ENCODE measurements at regions of chr2 and their contacts with region 1.

Region 1: GRCh38 chr2:200525882-200526651 is at the start of gene SGO2:
- DNase-seq: peak; percentile 84 to 95 (median 94)
- ATAC-seq: peak; percentile 100
- H3K4me3 ChIP-seq: peak within 1 kb of the TSS; percentile 74
- H3K4me3 Mint-ChIP-seq: peak within 1 kb of the TSS; percentile 88 to 95 (median 92)
- H3K27ac ChIP-seq: peak within 1 kb of the TSS; percentile 64
- H3K27ac Mint-ChIP-seq: peak within 1 kb of the TSS; percentile 66 to 89 (median 85)
- H3K4me1 ChIP-seq: peaks cover 6 to 8% of the 10 kb centered on the region in 2 donors
- H3K4me1 Mint-ChIP-seq: peaks cover 7 to 34% (median 9%) of the 10 kb centered on the region in 7 donors
- H3K27me3 ChIP-seq: no peaks in the 10 kb centered on the region
- H3K27me3 Mint-ChIP-seq: peaks cover 0 to 1% (median 0%) of the 10 kb centered on the region in 5 donors
- total RNA-seq, gene SGO2: 1.4 to 32.3 (median 2.9) TPM

Region 2: GRCh38 chr2:199850718-199851500 is 675.2 kb before region 1 on chr2 and contains the start of gene FTCDNL1:
- CTCF ChIA-PET with region 1: no interaction called
- POLR2A ChIA-PET with region 1: no interaction called
- intact Hi-C with region 1: loop called in 1 of 2 experiments (anchors 10 kb)
- DNase-seq: peak; percentile 46 to 77 (median 65)
- ATAC-seq: peak; percentile 96
- H3K4me3 ChIP-seq: peak within 1 kb of the TSS; percentile 75
- H3K4me3 Mint-ChIP-seq: peak within 1 kb of the TSS; percentile 90 to 100 (median 94)
- H3K27ac ChIP-seq: peak within 1 kb of the TSS; percentile 44
- H3K27ac Mint-ChIP-seq: peak within 1 kb of the TSS; percentile 80 to 96 (median 89)
- H3K4me1 ChIP-seq: no peaks in the 10 kb centered on the region
- H3K4me1 Mint-ChIP-seq: peaks cover 0 to 10% (median 6%) of the 10 kb centered on the region in 7 donors
- H3K27me3 ChIP-seq: no peaks in the 10 kb centered on the region
- H3K27me3 Mint-ChIP-seq: peaks cover 0 to 20% (median 0%) of the 10 kb centered on the region in 5 donors
- total RNA-seq, gene FTCDNL1: 1.2 to 3.7 (median 2.6) TPM

Region 3: GRCh38 chr2:200252265-200253067 is 273.6 kb before region 1 on chr2:
- CTCF ChIA-PET with region 1: no interaction called
- POLR2A ChIA-PET with region 1: no interaction called
- intact Hi-C with region 1: no loop called
- DNase-seq: no peak
- ATAC-seq: no peak
- H3K4me3 ChIP-seq: no peak overlapping the region
- H3K4me3 Mint-ChIP-seq: no peak overlapping the region
- H3K27ac ChIP-seq: no peak overlapping the region
- H3K27ac Mint-ChIP-seq: no peak overlapping the region
- H3K4me1 ChIP-seq: no peaks in the 10 kb centered on the region
- H3K4me1 Mint-ChIP-seq: peaks cover 0 to 5% (median 0%) of the 10 kb centered on the region in 7 donors
- H3K27me3 ChIP-seq: no peaks in the 10 kb centered on the region
- H3K27me3 Mint-ChIP-seq: peaks cover 8 to 28% (median 10%) of the 10 kb centered on the region in 5 donors

Region 4: DNA sequence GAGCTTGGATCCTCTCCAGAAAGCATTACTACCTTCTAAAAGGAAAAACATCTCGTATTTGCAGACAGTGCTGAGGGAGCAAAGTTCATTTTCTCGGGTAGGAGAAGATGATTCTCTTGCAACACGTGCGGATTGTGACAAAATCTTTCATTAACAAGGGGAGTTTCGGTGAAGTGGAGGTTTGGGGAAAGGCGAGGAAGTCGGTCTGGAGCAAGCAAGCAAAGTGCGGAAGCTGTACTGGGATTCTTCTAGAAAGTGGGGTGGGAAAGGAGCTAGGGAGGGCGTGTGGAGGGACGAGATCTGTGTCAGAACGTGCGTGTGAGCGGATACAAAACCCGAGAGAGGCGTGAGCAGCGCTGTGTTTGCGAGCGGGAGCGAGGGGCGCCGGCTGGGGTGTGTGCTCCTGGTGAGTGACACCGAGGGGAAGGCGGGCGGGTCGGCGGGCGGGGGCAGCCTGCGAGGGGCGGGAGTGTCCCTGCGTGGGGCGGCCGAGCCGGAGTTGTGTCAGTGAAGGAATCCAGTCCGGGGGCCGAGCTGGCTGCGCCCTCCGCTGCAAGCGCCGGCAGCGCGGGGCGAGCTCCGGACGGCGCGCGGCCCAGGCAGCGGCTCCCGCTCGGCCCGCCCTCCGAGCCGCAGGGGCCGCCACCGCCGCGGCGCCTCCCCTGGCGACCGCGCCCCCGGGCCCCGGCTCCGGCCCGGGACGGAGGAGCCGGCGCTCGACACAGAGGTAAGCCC is 219.7 kb before region 1 on chr2 and contains the start of gene SPATS2L:
- CTCF ChIA-PET with region 1: no interaction called
- POLR2A ChIA-PET with region 1: no interaction called
- intact Hi-C with region 1: loop called in 1 of 2 experiments (anchors 1 kb)
- DNase-seq: peak in 7 of 9 donors; percentile 12 to 36 (median 22)
- ATAC-seq: peak; percentile 58
- H3K4me3 ChIP-seq: peak within 1 kb of the TSS; percentile 63
- H3K4me3 Mint-ChIP-seq: peak within 1 kb of the TSS; percentile 86 to 96 (median 92)
- H3K27ac ChIP-seq: no peak within 1 kb of the TSS
- H3K27ac Mint-ChIP-seq: peak within 1 kb of the TSS in 7 of 9 donors; percentile 14 to 88 (median 63)
- H3K4me1 ChIP-seq: peaks cover 0 to 4% of the 10 kb centered on the region in 2 donors
- H3K4me1 Mint-ChIP-seq: peaks cover 7 to 32% (median 11%) of the 10 kb centered on the region in 7 donors
- H3K27me3 ChIP-seq: no peaks in the 10 kb centered on the region
- H3K27me3 Mint-ChIP-seq: peaks cover 0 to 58% (median 16%) of the 10 kb centered on the region in 5 donors
- total RNA-seq, gene SPATS2L: 2.3 to 51.9 (median 3.5) TPM

Region 5: DNA sequence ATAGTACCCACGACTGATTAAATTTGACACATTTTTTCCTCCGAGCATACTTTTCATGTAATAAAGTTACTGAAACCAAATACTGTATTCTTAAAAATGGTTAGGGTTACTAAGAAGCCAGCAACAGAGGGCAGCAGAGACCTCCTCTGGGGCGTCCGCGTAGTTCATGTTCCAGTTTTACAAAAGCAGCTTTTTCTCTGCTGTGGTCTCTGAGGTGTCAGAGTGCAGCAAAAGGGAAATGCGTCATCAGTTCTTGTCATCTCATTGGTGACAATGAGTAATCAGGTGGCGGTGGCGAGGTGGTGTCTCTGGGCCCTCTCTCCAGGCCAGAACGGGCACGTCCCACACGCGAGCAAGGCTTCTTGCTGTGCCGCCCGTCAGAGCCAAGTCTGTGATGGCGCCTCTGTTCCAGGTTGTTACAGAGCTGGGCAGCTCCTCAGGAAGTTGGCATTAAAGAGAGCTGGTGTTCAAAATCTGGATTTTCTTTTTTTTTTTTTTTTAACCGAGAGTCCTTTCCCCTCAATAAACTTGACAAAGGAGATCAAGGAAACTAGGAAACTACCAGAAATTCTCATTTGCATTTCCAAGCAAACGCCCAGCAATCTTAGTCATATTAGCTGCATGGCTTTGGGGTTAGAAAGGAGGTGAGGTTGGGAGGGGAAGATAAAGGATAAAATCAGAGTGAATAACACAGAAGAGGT is 187.1 kb after region 1 on chr2:
- CTCF ChIA-PET with region 1: no interaction called
- POLR2A ChIA-PET with region 1: no interaction called
- intact Hi-C with region 1: loop called (anchors 1 to 2 kb)
- DNase-seq: peak; percentile 72 to 96 (median 94)
- ATAC-seq: peak; percentile 98
- H3K4me3 ChIP-seq: peak overlapping the region; percentile 24
- H3K4me3 Mint-ChIP-seq: peak overlapping the region; percentile 75 to 88 (median 81)
- H3K27ac ChIP-seq: peak overlapping the region; percentile 82
- H3K27ac Mint-ChIP-seq: peak overlapping the region; percentile 97 to 100 (median 99)
- H3K4me1 ChIP-seq: peaks cover 5 to 8% of the 10 kb centered on the region in 2 donors
- H3K4me1 Mint-ChIP-seq: peaks cover 0 to 25% (median 12%) of the 10 kb centered on the region in 7 donors
- H3K27me3 ChIP-seq: no peaks in the 10 kb centered on the region
- H3K27me3 Mint-ChIP-seq: peaks cover 0 to 4% (median 0%) of the 10 kb centered on the region in 5 donors

Region 6: GRCh38 chr2:201071479-201072200 is 545.6 kb after region 1 on chr2 and contains the starts of genes HYCC2 and NDUFB3:
- CTCF ChIA-PET with region 1: interaction called, 5 read pairs
- POLR2A ChIA-PET with region 1: no interaction called
- intact Hi-C with region 1: loop called in 1 of 2 experiments (anchors 5 kb)
- DNase-seq: peak; percentile 79 to 96 (median 95)
- ATAC-seq: peak; percentile 98
- H3K4me3 ChIP-seq: peak within 1 kb of the TSS; percentile 92
- H3K4me3 Mint-ChIP-seq: peak within 1 kb of the TSS; percentile 91 to 99 (median 94)
- H3K27ac ChIP-seq: peak within 1 kb of the TSS; percentile 83
- H3K27ac Mint-ChIP-seq: peak within 1 kb of the TSS; percentile 86 to 99 (median 95)
- H3K4me1 ChIP-seq: peaks cover 32 to 36% of the 10 kb centered on the region in 2 donors
- H3K4me1 Mint-ChIP-seq: peaks cover 31 to 74% (median 55%) of the 10 kb centered on the region in 7 donors
- H3K27me3 ChIP-seq: no peaks in the 10 kb centered on the region
- H3K27me3 Mint-ChIP-seq: no peaks in the 10 kb centered on the region
- total RNA-seq, gene HYCC2: 34.8 to 38.3 (median 36.1) TPM
- total RNA-seq, gene NDUFB3: 18.3 to 109 (median 38.3) TPM

Region 7: DNA sequence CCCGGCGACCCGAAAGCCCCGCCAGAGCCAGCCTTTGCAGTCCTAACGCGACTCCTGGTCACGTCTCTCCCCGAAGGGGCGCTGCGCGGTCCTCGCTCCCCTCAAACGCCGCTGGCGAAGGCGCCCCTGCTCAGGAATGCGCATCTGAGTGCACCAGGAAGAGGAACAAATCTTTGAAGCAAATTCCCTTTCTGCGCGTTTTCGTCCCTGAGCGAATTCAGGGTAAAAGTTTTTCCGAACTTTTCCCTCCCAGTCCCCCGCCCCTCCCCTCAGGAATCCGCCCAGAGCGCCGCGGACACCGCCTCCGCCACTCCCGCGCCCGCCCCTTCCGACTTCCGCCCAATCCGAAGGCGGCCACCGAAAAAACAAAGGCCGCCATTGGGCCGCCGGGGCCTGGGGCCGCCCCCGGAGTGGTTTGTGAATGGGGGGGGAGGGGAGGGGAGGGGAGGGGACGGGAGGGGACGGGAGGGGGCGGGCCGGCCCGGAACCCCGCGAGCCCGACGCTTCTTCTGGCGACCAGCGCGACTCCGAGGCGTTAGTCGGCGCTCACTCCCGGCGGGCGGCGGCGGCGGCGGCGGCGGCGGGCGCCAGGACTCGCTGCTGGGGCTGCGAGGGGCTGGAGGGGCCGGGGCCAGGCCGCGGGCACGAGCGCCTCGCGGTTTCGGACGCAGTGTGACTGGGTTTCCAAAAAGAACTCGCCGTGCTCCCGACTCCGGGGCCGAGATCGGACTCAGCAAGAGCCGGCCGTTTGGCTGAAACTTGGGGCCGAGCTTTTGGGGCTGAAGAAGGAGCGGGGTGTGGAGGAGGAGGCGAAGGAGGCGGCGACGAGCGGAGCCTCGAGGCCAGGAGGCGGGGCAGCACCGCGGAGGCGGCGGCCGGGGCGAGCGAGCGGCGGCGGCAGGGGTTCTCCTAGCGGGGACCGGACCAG is 1507.5 kb after region 1 on chr2 and contains the start of gene FZD7:
- CTCF ChIA-PET with region 1: no interaction called
- POLR2A ChIA-PET with region 1: no interaction called
- intact Hi-C with region 1: loop called in 1 of 2 experiments (anchors 2 kb)
- DNase-seq: peak; percentile 70 to 87 (median 81)
- ATAC-seq: peak; percentile 92
- H3K4me3 ChIP-seq: peak within 1 kb of the TSS; percentile 91
- H3K4me3 Mint-ChIP-seq: peak within 1 kb of the TSS in 9 of 10 donors; percentile 87 to 96 (median 92)
- H3K27ac ChIP-seq: peak within 1 kb of the TSS; percentile 44
- H3K27ac Mint-ChIP-seq: peak within 1 kb of the TSS in 8 of 9 donors; percentile 46 to 83 (median 72)
- H3K4me1 ChIP-seq: peaks cover 9 to 11% of the 10 kb centered on the region in 2 donors
- H3K4me1 Mint-ChIP-seq: peaks cover 6 to 17% (median 14%) of the 10 kb centered on the region in 7 donors
- H3K27me3 ChIP-seq: peaks cover 6 to 22% of the 10 kb centered on the region in 2 donors
- H3K27me3 Mint-ChIP-seq: peaks cover 0 to 45% (median 7%) of the 10 kb centered on the region in 5 donors
- total RNA-seq, gene FZD7: 0.27 to 0.99 (median 0.43) TPM

Measured in naive thymus-derived CD4-positive, alpha-beta T cell (primary cell).